HAP-1 (cell line): ENCODE measurements at regions of chr22 and their contacts with region 1.

Region 1: DNA sequence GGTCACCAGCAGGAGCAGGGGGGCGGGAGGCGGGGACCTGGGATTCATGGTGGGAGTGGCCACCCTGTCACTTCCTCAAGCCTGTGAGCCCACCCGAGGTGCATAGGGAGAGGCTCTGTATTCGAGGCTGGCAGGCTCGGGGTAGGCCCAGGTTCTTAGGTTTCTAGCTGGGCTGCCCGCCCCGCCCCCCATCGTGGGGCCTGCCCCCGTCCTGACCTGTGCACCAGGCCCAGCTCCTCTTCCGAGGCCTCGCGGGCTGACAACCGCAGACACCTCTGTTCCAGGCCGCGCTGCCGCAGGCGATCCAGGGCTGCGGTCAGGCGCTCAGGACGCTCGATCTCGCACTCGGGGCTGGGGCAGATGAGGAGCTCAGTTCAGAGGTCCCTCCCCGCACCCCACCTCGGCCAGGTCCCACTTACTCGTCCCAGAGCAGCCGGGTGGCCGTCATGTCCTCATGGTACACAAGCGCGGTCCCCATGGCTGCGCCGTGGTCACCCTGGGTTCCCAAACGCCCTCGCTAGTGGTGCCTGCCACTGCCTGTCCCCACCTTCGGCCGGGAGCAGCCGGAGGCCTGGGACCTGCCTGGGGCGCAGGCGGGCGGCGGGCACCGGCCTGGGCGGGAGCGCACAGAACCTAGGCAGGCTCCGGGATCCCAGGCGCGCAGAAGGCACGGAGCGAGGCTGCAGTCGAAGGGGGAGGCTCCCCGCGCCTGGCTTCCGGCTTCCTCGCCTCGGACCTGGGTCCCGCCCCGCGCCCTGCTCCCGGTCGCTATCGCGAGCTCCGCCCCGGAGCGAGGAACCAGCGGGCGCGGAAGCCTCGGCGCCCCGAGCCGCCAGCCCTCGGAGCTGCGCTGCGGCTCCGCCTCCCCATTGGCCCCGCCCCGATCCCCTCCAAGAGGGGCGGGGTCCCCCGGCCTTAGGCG is at the start of gene HDAC10:
- DNase-seq: peak; percentile 80 to 91
- H3K4me3 ChIP-seq: peak within 1 kb of the TSS; percentile 71
- H3K4me1 ChIP-seq: peaks cover 5% of the 10 kb centered on the region
- H3K27me3 ChIP-seq: no peaks in the 10 kb centered on the region

Region 2: DNA sequence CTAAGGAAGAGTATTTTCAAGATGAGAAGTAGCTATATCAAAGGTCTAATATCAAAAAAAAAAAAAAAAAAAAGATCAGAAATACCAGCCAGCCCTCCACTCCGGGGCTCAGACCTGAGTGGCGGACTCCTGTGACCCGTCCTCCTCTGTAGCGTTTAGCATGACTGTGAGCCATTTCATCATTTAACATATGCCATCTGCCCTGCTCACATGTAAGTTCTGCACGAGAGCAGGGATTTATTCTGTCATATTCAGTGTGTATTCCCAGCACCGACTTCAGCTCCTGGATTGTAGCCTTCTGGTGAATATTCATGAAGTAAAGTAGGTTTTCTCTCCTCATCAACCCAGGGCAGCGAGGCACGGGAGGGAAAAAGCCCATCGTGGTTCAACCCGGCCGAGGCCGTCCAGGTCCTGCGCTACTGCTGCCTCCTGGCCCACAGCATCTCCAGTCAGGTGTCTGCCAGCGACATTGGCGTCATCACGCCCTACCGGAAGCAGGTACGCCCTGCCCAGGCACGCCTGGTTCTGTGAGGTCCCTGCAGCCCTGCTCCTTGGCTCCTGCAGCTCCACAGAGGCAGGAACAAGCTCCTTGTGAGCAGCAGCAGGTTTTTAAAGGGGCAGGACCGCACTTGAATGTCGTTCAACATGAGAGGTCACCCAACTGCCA is 93.0 kb before region 1 on chr22:
- in situ Hi-C with region 1: no loop called
- DNase-seq: no peak
- H3K4me3 ChIP-seq: no peak overlapping the region
- H3K4me1 ChIP-seq: no peaks in the 10 kb centered on the region
- H3K27me3 ChIP-seq: no peaks in the 10 kb centered on the region; the same call in 1 of the 2 replicates

Region 3: GRCh38 chr22:50517495-50518260 is 266.9 kb after region 1 on chr22:
- in situ Hi-C with region 1: loop called (anchors 10 kb)
- DNase-seq: no peak
- H3K4me3 ChIP-seq: no peak overlapping the region
- H3K4me1 ChIP-seq: no peaks in the 10 kb centered on the region
- H3K27me3 ChIP-seq: no peaks in the 10 kb centered on the region